HCT116 (cell line): ENCODE measurements at regions of chr15 and their contacts with region 1.

Region 1: DNA sequence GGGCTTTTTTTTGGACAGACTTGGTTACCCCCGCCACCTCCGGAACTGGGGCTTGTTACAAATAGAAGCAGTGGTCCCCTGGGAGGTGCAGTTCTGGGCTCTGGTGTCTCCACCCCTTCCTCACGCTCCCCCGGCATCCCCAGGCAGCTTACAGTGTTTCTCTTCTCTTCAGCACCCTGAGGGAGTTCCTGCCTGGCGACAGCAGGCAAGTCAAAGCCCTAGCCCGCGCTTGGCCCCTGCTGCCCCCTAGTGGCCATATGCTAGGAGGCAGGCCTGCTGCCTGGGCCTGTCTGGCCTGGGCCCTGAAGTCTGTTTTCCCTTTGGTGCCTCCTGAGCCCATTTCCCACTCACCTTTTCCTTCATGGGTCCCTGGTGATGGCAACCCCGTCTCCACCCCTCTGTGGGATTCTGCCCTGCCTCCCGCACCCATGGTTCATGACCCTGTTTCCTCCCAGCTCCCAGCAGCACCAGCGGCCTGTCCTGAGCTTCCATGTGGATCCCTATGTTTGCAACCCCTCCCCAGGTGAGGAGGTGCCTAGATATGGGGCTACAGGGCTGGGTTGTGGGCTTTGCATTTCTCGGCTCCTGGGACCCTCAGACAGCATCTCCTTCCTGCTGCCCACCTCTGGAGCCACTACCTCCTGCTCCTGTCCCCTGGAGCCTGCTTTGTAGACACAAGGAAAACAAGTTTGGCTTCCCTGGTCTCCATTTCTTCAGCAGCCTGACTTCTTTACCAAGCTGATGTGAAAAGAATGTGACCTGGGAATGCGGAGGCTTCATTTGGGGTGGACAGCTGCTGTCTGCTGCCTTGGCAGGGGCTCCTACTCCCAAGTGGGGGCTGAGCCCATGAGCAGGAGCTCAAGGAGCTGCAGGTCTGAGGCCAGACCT is 2.2 kb downstream of the SNX22 start:
- DNase-seq: peak; percentile 57
- ATAC-seq: peak; percentile 76
- H3K4me3 ChIP-seq: no peak overlapping the region
- H3K27ac ChIP-seq: peak overlapping the region; percentile 37
- H3K4me1 ChIP-seq: peaks cover 6 to 35% of the 10 kb centered on the region in 2 experiments
- H3K27me3 ChIP-seq: no peaks in the 10 kb centered on the region
- CTCF ChIP-seq: peak; percentile 66 to 98 (median 96); a peak in 5 of 6 replicates
- POLR2A ChIP-seq: no peak
- RAD21 ChIP-seq: peak; percentile 82

Region 2: DNA sequence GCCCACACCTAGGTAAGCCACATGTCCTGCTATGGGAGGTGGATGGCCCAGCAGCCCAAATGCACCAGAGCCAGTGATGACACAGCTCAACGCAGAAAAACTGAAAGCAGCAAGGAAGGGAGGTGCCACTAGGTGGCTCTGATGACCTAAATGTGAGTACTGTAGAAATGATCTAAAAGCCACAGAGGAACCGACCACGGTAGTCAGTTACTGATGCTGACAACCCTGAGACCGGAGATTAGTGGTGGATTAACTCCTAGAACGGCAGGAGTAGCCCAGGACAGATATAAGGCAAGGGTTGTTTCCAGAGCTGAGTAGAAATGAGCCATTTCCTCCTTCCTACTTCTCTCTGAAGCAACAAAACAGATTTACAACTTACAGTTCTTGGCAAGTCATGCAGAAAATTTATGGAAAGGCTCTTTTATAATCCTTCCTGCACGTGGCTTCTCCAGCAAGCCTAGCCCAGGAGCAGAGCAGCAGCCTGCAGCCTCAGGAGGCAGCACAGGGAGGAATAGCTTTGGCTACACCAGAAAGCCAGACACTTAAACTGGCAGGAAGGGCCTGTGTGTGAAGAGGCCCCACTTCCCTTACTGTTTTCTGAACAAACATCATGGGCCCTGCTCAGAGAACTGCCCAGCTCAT is 543.4 kb before region 1 on chr15:
- CTCF ChIA-PET with region 1: interaction called, 5 read pairs
- POLR2A ChIA-PET with region 1: no interaction called
- RAD21 ChIA-PET with region 1: interaction called in 1 of 2 experiments, 3 read pairs
- intact Hi-C with region 1: loop called (anchors 5 kb)
- DNase-seq: peak; percentile 69
- ATAC-seq: peak; percentile 98
- H3K4me3 ChIP-seq: no peak overlapping the region
- H3K27ac ChIP-seq: no peak overlapping the region
- H3K4me1 ChIP-seq: peaks cover 0 to 4% of the 10 kb centered on the region in 2 experiments; a peak in 1 of 4 replicates
- H3K27me3 ChIP-seq: no peaks in the 10 kb centered on the region
- CTCF ChIP-seq: peak; percentile 77 to 82 (median 80)
- POLR2A ChIP-seq: no peak
- RAD21 ChIP-seq: peak; percentile 90

Region 3: GRCh38 chr15:64093627-64094417 is 59.9 kb before region 1 on chr15 and contains the start of gene CIAO2A:
- CTCF ChIA-PET with region 1: interaction called, 11 read pairs
- POLR2A ChIA-PET with region 1: interaction called, 3 read pairs
- RAD21 ChIA-PET with region 1: no interaction called
- intact Hi-C with region 1: loop called (anchors 5 kb)
- DNase-seq: peak; percentile 99
- ATAC-seq: peak; percentile 85
- H3K4me3 ChIP-seq: peak within 1 kb of the TSS; percentile 85 to 96
- H3K27ac ChIP-seq: peak within 1 kb of the TSS; percentile 65
- H3K4me1 ChIP-seq: peaks cover 25 to 37% of the 10 kb centered on the region in 2 experiments
- H3K27me3 ChIP-seq: no peaks in the 10 kb centered on the region
- CTCF ChIP-seq: no peak
- POLR2A ChIP-seq: peak; percentile 69
- RAD21 ChIP-seq: no peak
- total RNA-seq, gene CIAO2A: 69.3 TPM

Region 4: GRCh38 chr15:64355944-64356709 is 202.4 kb after region 1 on chr15 and contains the start of gene CSNK1G1:
- CTCF ChIA-PET with region 1: no interaction called
- POLR2A ChIA-PET with region 1: no interaction called
- RAD21 ChIA-PET with region 1: no interaction called
- intact Hi-C with region 1: loop called (anchors 5 kb)
- DNase-seq: peak; percentile 91
- ATAC-seq: peak; percentile 95
- H3K4me3 ChIP-seq: peak within 1 kb of the TSS; percentile 78 to 93
- H3K27ac ChIP-seq: peak within 1 kb of the TSS; percentile 77
- H3K4me1 ChIP-seq: peaks cover 9 to 19% of the 10 kb centered on the region in 2 experiments; a peak in 3 of 4 replicates
- H3K27me3 ChIP-seq: no peaks in the 10 kb centered on the region
- CTCF ChIP-seq: peak; percentile 21 to 87 (median 51); a peak in 4 of 6 replicates
- POLR2A ChIP-seq: no peak
- RAD21 ChIP-seq: peak; percentile 70
- total RNA-seq, gene CSNK1G1: 21.1 TPM